Ascending aorta (tissue), 2 donors: ENCODE measurements at regions of chr12 and their contacts with region 1.

Region 1: DNA sequence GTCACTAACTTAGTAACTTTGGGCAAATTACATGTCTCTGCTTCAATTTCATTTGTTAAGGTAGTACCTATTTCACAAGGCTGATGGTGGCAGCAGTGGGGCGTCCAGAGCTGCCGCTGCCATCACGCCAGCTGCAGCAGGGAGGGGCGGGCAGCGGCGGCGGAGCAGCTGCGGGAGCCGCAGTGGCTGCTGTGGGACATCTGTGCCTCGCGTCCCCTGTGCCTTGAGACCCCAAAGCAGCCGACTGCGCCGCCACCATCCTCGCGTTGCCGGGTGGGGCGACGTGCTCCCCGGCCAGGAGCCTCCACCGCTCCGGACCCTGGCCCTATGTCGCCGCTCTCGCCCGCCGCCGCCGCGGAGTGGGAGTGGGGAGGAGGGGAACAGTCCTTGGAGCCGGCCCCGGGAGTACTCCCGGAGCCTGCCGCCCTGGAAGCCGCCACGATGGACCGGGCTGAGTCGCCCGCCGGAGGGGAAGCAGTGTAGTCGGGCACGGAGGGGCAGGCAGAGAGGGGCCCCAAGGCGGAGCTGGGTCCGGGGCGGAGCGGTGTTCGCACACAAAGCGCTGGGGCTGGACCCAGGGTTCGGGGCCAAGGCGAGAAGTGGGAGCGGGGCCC is 51.4 kb downstream of the A2M start:
- DNase-seq: peak in 1 of 2 donors; percentile 82
- H3K4me3 ChIP-seq: peak overlapping the region; percentile 70 to 99
- H3K27ac ChIP-seq: peak overlapping the region; percentile 98 to 100
- H3K4me1 ChIP-seq: peaks cover 0 to 15% of the 10 kb centered on the region in 2 donors
- H3K27me3 ChIP-seq: no peaks in the 10 kb centered on the region
- CTCF ChIP-seq: peak; percentile 36 to 59 (median 38)

Region 2: DNA sequence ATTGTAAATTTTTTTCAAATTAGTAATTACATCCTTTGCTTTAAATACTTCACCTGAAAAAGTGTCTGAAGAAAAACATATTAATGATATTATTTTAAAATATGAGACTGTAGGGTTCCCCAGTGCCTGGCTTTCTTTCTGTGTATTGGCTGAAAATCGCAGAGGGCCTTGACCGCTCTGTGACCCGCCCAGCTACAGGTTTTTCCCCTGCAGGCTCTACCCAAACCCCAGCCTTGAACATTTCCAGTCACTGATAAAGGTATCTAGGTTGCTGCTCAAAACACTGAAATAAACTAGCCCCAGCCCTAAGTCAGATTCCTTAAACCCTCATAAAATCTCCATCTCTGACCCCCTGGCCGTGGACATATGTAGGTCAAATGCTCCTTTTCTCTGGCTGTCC is 63.1 kb before region 1 on chr12:
- intact Hi-C with region 1: no loop called
- DNase-seq: no peak
- H3K4me3 ChIP-seq: no peak overlapping the region
- H3K27ac ChIP-seq: no peak overlapping the region
- H3K4me1 ChIP-seq: no peaks in the 10 kb centered on the region
- H3K27me3 ChIP-seq: no peaks in the 10 kb centered on the region
- CTCF ChIP-seq: no peak

Region 3: DNA sequence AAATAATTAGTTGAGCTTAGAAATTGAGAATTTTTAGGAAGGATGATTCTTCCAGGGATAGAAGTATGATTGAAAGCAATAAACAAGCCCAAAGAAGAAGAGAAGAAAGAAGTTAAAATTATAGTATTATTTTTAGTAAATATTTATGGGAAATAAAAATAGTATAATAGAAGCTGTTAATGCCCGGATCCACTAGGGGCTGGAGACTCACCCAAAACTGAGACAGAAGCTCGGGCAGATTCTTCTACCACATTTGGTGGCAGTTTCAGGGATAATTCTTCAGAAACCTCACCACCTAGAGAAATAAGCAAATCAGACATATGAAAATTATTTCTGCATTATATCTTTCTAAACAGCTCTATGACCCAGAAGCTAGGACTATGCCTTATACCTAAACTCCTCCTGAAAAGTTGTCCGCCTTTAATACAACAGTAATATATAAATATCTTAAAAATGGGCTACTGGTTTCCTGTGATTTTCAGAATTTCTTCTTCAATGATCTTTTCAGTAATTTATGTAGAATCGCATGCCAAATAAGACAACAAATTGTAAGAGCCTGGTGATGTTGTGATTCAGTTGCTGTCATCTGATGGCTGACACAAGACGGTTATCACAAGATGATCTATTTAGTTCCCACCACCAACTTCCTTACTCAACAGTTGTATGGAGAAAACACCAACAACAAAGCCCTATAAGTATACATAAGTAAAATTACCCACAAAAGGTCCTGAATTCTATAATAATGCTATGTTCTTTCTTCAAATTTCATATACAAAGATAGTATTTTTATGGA is 15.8 kb after region 1 on chr12:
- intact Hi-C with region 1: no loop called
- DNase-seq: no peak
- H3K4me3 ChIP-seq: no peak overlapping the region
- H3K27ac ChIP-seq: no peak overlapping the region
- H3K4me1 ChIP-seq: no peaks in the 10 kb centered on the region
- H3K27me3 ChIP-seq: no peaks in the 10 kb centered on the region
- CTCF ChIP-seq: no peak

Region 4: DNA sequence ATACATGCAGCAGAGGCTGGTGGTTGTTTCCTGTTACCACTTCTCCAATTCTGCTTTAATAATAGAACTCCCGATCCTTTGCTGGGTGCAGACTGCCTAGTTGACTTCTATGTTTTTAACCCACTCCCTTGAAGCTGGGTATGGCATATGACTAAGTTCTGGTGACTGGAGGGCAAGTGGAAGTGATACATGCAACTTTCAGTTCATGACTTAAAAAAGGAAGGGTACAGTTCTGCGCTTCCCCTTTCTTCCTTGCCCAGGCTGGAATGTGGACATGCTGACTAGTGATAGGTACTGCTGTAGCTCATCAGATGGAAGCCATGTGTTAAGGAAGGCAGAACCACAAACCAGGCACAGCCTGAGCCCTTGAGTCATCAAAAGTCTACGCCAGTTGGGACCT is 53.9 kb after region 1 on chr12:
- intact Hi-C with region 1: loop called (anchors 5 kb)
- DNase-seq: peak; percentile 30 to 70
- H3K4me3 ChIP-seq: peak overlapping the region; percentile 34 to 69
- H3K27ac ChIP-seq: peak overlapping the region; percentile 80 to 85
- H3K4me1 ChIP-seq: peaks cover 3 to 32% of the 10 kb centered on the region in 2 donors
- H3K27me3 ChIP-seq: no peaks in the 10 kb centered on the region
- CTCF ChIP-seq: no peak

Region 5: GRCh38 chr12:9276990-9277389 is 212.7 kb after region 1 on chr12:
- intact Hi-C with region 1: loop called (anchors 5 kb)
- DNase-seq: no peak
- H3K4me3 ChIP-seq: no peak overlapping the region
- H3K27ac ChIP-seq: no peak overlapping the region
- H3K4me1 ChIP-seq: no peaks in the 10 kb centered on the region
- H3K27me3 ChIP-seq: no peaks in the 10 kb centered on the region
- CTCF ChIP-seq: no peak

Region 6: GRCh38 chr12:9651265-9651729 is 587.0 kb after region 1 on chr12:
- intact Hi-C with region 1: loop called (anchors 10 kb)
- DNase-seq: no peak
- H3K4me3 ChIP-seq: no peak overlapping the region
- H3K27ac ChIP-seq: peak overlapping the region in 1 of 2 donors; percentile 3
- H3K4me1 ChIP-seq: peaks cover 0 to 3% of the 10 kb centered on the region in 2 donors
- H3K27me3 ChIP-seq: no peaks in the 10 kb centered on the region
- CTCF ChIP-seq: no peak